K562 (cell line): ENCODE measurements at regions of chr10 and their contacts with region 1.

Region 1: GRCh38 chr10:11178606-11179515 is 161.2 kb downstream of the CELF2 start:
- DNase-seq: peak; percentile 80 to 96 (median 89)
- ATAC-seq: peak; percentile 99
- H3K4me3 ChIP-seq: no peak overlapping the region
- H3K27ac ChIP-seq: peak overlapping the region; percentile 68
- H3K4me1 ChIP-seq: peaks cover 7 to 37% of the 10 kb centered on the region in 2 experiments
- H3K27me3 ChIP-seq: no peaks in the 10 kb centered on the region
- CTCF ChIP-seq: no peak
- EP300 ChIP-seq: peak; percentile 94
- POLR2A ChIP-seq: no peak
- RAD21 ChIP-seq: peak; percentile 1 to 9; a peak in 1 of 4 replicates

Region 2: GRCh38 chr10:10891124-10892082 is 287.5 kb before region 1 on chr10:
- CTCF ChIA-PET with region 1: no interaction called
- POLR2A ChIA-PET with region 1: no interaction called
- in situ Hi-C with region 1: no loop called
- intact Hi-C with region 1: no loop called
- DNase-seq: no peak
- ATAC-seq: no peak
- H3K4me3 ChIP-seq: no peak overlapping the region
- H3K27ac ChIP-seq: no peak overlapping the region
- H3K4me1 ChIP-seq: no peaks in the 10 kb centered on the region
- H3K27me3 ChIP-seq: no peaks in the 10 kb centered on the region
- CTCF ChIP-seq: no peak
- EP300 ChIP-seq: no peak
- POLR2A ChIP-seq: no peak
- RAD21 ChIP-seq: no peak

Region 3: DNA sequence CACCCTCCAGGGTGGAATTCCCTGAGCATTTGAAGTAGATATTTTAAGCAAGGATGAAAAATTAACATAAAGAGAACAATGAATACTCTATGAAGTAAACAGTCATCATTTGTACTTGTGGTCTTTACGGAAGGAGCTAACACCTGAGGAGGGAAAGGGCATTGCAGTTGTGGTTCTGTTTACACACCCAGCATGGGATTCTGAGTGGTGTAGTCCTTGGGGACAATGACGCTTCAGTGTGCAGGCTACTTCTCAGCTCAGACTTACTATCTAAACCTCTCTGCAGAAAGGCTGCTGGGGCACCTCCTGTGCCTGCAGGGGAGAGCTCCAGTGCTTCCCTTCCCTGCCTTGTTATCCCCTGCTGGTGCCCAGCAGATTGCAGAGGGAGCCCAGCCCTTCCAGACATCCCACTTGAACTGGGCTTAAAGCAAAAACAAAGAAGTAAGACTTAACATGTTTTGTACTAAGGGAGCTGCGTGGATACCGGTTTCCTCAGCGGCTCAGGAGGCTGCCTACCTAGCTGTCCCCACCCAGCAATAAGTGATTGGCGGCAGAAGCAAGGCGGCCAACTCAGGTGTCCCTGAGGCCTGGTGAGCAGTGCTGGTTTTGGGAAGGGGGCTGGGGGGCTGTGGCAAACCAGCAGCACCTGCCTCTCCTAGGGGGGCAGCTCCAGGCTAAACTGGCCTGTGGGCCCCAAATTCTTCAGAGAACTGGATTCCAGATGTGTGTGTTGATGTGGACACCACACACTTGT is 72.1 kb before region 1 on chr10:
- CTCF ChIA-PET with region 1: no interaction called
- POLR2A ChIA-PET with region 1: interaction called, 3 read pairs
- in situ Hi-C with region 1: no loop called
- intact Hi-C with region 1: loop called (anchors 5 kb)
- DNase-seq: no peak
- ATAC-seq: peak; percentile 44; the same call in 2 of the 3 replicates
- H3K4me3 ChIP-seq: no peak overlapping the region
- H3K27ac ChIP-seq: no peak overlapping the region
- H3K4me1 ChIP-seq: no peaks in the 10 kb centered on the region; a peak in 2 of 5 replicates
- H3K27me3 ChIP-seq: no peaks in the 10 kb centered on the region; a peak in 1 of 5 replicates
- CTCF ChIP-seq: no peak
- EP300 ChIP-seq: no peak
- POLR2A ChIP-seq: no peak
- RAD21 ChIP-seq: 0 out of 4 replicates have a peak, but pooled peaks of 1 of the 2 experiments have one; percentile 3

Region 4: GRCh38 chr10:11141571-11142091 is 37.2 kb before region 1 on chr10:
- CTCF ChIA-PET with region 1: no interaction called
- POLR2A ChIA-PET with region 1: no interaction called
- in situ Hi-C with region 1: no loop called
- intact Hi-C with region 1: loop called (anchors 1 kb)
- DNase-seq: peak; percentile 15 to 86 (median 44)
- ATAC-seq: peak; percentile 87
- H3K4me3 ChIP-seq: no peak overlapping the region
- H3K27ac ChIP-seq: peak overlapping the region; percentile 30; the same call in 2 of the 3 replicates
- H3K4me1 ChIP-seq: peaks cover 14 to 31% of the 10 kb centered on the region in 2 experiments
- H3K27me3 ChIP-seq: no peaks in the 10 kb centered on the region
- CTCF ChIP-seq: no peak
- EP300 ChIP-seq: peak; percentile 97
- POLR2A ChIP-seq: no peak
- RAD21 ChIP-seq: peak in 1 of 2 experiments; percentile 25; a peak in 1 of 4 replicates

Region 5: GRCh38 chr10:11165591-11166543 is 13.0 kb before region 1 on chr10:
- CTCF ChIA-PET with region 1: no interaction called
- POLR2A ChIA-PET with region 1: interaction called, 5 read pairs
- in situ Hi-C with region 1: no loop called
- intact Hi-C with region 1: loop called (anchors 1 kb)
- DNase-seq: peak; percentile 77 to 88 (median 81)
- ATAC-seq: peak; percentile 89
- H3K4me3 ChIP-seq: peak overlapping the region; percentile 55
- H3K27ac ChIP-seq: peak overlapping the region; percentile 57
- H3K4me1 ChIP-seq: peaks cover 12 to 36% of the 10 kb centered on the region in 2 experiments
- H3K27me3 ChIP-seq: no peaks in the 10 kb centered on the region
- CTCF ChIP-seq: peak; percentile 48 to 83 (median 67)
- EP300 ChIP-seq: no peak
- POLR2A ChIP-seq: no peak
- RAD21 ChIP-seq: peak; percentile 51 to 57

Region 6: GRCh38 chr10:11270135-11270857 is 91.4 kb after region 1 on chr10:
- CTCF ChIA-PET with region 1: no interaction called
- POLR2A ChIA-PET with region 1: no interaction called
- in situ Hi-C with region 1: no loop called
- intact Hi-C with region 1: loop called (anchors 1 kb)
- DNase-seq: peak; percentile 66 to 88 (median 76)
- ATAC-seq: peak; percentile 100
- H3K4me3 ChIP-seq: no peak overlapping the region
- H3K27ac ChIP-seq: no peak overlapping the region
- H3K4me1 ChIP-seq: peaks cover 0 to 6% of the 10 kb centered on the region in 2 experiments; a peak in 2 of 5 replicates
- H3K27me3 ChIP-seq: no peaks in the 10 kb centered on the region
- CTCF ChIP-seq: peak; percentile 92 to 96 (median 96)
- EP300 ChIP-seq: no peak
- POLR2A ChIP-seq: no peak
- RAD21 ChIP-seq: peak; percentile 95 to 96